Common myeloid progenitor, CD34-positive (primary cell): ENCODE measurements at regions of chr11 and their contacts with region 1.

Region 1: DNA sequence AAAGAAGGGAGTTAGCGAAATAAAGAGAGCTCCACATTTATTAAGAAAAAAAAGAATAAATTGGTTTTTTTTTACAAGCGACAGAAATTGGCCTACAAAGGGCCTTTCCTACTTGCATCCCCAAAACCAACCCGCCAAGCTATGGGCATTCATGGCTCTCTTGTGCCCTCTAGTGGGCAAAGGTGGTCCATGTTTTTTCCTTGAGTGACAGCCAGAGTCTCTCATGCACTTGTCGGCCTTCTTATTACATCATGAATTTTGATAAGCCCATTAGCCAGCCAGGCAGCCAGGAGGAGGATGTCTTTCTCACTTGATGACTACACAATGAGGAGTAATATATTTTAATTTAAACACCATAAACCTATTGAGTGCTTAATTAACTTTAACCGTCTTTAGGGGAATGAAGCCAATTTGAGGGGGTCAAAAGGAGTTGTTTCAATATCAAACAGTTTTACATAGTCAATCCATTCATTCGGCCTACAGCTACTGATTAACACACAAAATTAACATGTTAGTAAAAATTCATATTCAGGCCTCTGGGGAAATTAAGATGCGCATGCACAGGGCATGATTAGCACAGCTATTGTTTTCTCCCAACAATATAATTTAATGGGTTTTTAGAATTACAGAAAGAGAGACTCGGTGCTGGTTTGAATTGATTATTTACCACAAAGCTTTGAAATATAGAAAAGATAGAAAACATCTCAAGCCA is 85.5 kb downstream of the RCN1 start:
- DNase-seq: peak; percentile 89 to 93 (median 90)
- H3K4me3 ChIP-seq: no peak overlapping the region
- H3K27ac ChIP-seq: no peak overlapping the region
- H3K4me1 ChIP-seq: peaks cover 0 to 11% (median 2%) of the 10 kb centered on the region in 4 experiments
- H3K27me3 ChIP-seq: peaks cover 0 to 2% (median 0%) of the 10 kb centered on the region in 5 experiments

Region 2: GRCh38 chr11:31987118-31988005 is 189.0 kb before region 1 on chr11:
- CTCF ChIA-PET with region 1: no interaction called
- POLR2A ChIA-PET with region 1: no interaction called
- DNase-seq: peak in 2 of 3 donors; percentile 47 to 54
- H3K4me3 ChIP-seq: peak overlapping the region in 5 of 7 experiments; percentile 21 to 61 (median 48)
- H3K27ac ChIP-seq: no peak overlapping the region
- H3K4me1 ChIP-seq: peaks cover 0 to 3% (median 0%) of the 10 kb centered on the region in 4 experiments
- H3K27me3 ChIP-seq: peaks cover 9 to 48% (median 26%) of the 10 kb centered on the region in 5 experiments

Region 3: GRCh38 chr11:32045456-32045855 is 130.9 kb before region 1 on chr11:
- CTCF ChIA-PET with region 1: interaction called, 246 read pairs
- POLR2A ChIA-PET with region 1: no interaction called
- DNase-seq: no peak
- H3K4me3 ChIP-seq: no peak overlapping the region
- H3K27ac ChIP-seq: no peak overlapping the region
- H3K4me1 ChIP-seq: no peaks in the 10 kb centered on the region
- H3K27me3 ChIP-seq: peaks cover 0 to 7% (median 0%) of the 10 kb centered on the region in 5 experiments

Region 4: GRCh38 chr11:32154275-32154674 is 22.1 kb before region 1 on chr11:
- CTCF ChIA-PET with region 1: interaction called, 12 read pairs
- POLR2A ChIA-PET with region 1: no interaction called
- DNase-seq: peak; percentile 23 to 44 (median 37)
- H3K4me3 ChIP-seq: no peak overlapping the region
- H3K27ac ChIP-seq: no peak overlapping the region
- H3K4me1 ChIP-seq: peaks cover 0 to 3% (median 1%) of the 10 kb centered on the region in 4 experiments
- H3K27me3 ChIP-seq: peaks cover 0 to 16% (median 0%) of the 10 kb centered on the region in 5 experiments

Region 5: GRCh38 chr11:32200136-32200847 is 23.9 kb after region 1 on chr11:
- CTCF ChIA-PET with region 1: no interaction called
- POLR2A ChIA-PET with region 1: no interaction called
- DNase-seq: no peak
- H3K4me3 ChIP-seq: no peak overlapping the region
- H3K27ac ChIP-seq: no peak overlapping the region
- H3K4me1 ChIP-seq: no peaks in the 10 kb centered on the region
- H3K27me3 ChIP-seq: peaks cover 0 to 3% (median 0%) of the 10 kb centered on the region in 5 experiments